K562 (cell line): ENCODE measurements at regions of chr1 and their contacts with region 1.

Region 1: DNA sequence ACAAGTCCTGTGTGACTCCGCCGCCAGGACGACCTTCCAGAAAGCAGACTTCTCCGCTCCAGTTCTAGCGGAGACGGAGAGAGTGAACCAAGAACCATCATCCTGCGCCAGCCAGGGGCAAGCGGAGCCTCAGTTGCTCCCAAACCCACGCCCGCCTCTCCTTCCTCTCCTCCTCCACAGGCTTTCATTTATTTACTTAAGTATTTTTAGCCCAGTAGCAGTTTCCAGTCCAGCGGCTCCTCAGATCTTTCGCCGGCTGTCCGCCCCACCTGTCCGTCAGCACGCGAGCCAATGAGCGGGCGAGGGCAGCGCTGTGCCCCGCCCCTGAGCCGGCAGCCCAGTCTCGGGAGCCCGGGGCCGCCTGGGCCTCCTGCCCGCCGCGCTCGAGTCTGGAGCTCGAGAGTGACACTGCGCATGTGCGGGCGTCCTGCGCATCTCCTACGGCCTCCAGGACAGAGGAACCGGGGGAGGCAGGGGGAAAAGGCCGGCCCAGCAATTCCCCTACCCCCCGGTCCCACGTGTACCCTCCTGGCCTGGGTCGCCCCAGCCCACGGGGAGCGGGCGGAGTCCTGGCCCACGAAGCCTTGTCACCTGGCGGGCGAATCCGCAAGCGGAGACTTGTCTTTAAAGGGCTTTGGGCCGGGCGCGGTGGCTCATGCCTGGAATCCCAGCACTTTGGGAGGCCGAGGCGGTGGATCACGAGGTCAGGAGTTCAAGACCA is at the start of gene FALEC:
- DNase-seq: peak; percentile 97 to 99 (median 98)
- ATAC-seq: peak; percentile 97
- H3K4me3 ChIP-seq: peak within 1 kb of the TSS; percentile 43
- H3K27ac ChIP-seq: peak within 1 kb of the TSS; percentile 83
- H3K4me1 ChIP-seq: peaks cover 28 to 42% of the 10 kb centered on the region in 2 experiments; a peak in 4 of 5 replicates
- H3K27me3 ChIP-seq: no peaks in the 10 kb centered on the region
- CTCF ChIP-seq: no peak
- EP300 ChIP-seq: no peak
- POLR2A ChIP-seq: peak; percentile 72
- RAD21 ChIP-seq: no peak
- polyA plus RNA-seq, gene FALEC: not detected

Region 2: DNA sequence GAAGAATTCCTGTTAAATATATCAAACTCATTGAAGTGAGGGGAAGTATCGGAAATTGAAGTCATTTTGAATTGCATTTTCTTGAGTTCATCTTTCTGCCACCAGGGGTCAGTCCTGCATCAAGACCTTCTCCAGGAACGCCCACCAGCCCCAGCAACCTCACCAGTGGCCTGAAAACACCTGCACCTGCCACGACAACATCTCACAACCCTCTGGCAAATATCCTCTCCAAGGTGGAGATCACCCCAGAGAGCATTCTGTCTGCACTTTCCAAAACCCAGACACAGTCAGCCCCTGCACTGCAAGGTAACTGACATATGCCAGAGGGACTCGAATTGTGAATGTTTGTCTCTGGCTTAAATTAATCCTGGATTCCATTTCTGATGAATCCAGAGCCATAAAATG is 51.1 kb before region 1 on chr1:
- CTCF ChIA-PET with region 1: interaction called, 10 read pairs
- POLR2A ChIA-PET with region 1: no interaction called
- in situ Hi-C with region 1: no loop called
- intact Hi-C with region 1: loop called (anchors 5 kb)
- DNase-seq: peak; percentile 67 to 84 (median 77)
- ATAC-seq: peak; percentile 85
- H3K4me3 ChIP-seq: no peak overlapping the region
- H3K27ac ChIP-seq: no peak overlapping the region
- H3K4me1 ChIP-seq: no peaks in the 10 kb centered on the region
- H3K27me3 ChIP-seq: no peaks in the 10 kb centered on the region
- CTCF ChIP-seq: peak; percentile 75 to 82 (median 81)
- EP300 ChIP-seq: no peak
- POLR2A ChIP-seq: no peak
- RAD21 ChIP-seq: peak; percentile 75 to 81

Region 3: GRCh38 chr1:150486964-150487762 is 28.3 kb before region 1 on chr1 and contains the start of gene TARS2:
- CTCF ChIA-PET with region 1: no interaction called
- POLR2A ChIA-PET with region 1: interaction called, 3 read pairs
- in situ Hi-C with region 1: no loop called
- intact Hi-C with region 1: loop called (anchors 1 kb)
- DNase-seq: peak; percentile 97 to 98 (median 98)
- ATAC-seq: peak; percentile 100
- H3K4me3 ChIP-seq: peak within 1 kb of the TSS; percentile 74
- H3K27ac ChIP-seq: peak within 1 kb of the TSS; percentile 93
- H3K4me1 ChIP-seq: peaks cover 3 to 10% of the 10 kb centered on the region in 2 experiments; a peak in 3 of 5 replicates
- H3K27me3 ChIP-seq: no peaks in the 10 kb centered on the region
- CTCF ChIP-seq: no peak; a peak in 1 of 6 replicates
- EP300 ChIP-seq: peak; percentile 61
- POLR2A ChIP-seq: peak; percentile 95
- RAD21 ChIP-seq: peak in 1 of 2 experiments; percentile 32; a peak in 1 of 4 replicates
- polyA plus RNA-seq, gene TARS2: 17.0 to 30.1 TPM

Region 4: GRCh38 chr1:150532868-150533302 is 17.4 kb after region 1 on chr1:
- CTCF ChIA-PET with region 1: no interaction called
- POLR2A ChIA-PET with region 1: interaction called, 17 read pairs
- in situ Hi-C with region 1: no loop called
- intact Hi-C with region 1: no loop called
- DNase-seq: no peak
- ATAC-seq: no peak
- H3K4me3 ChIP-seq: no peak overlapping the region
- H3K27ac ChIP-seq: 0 out of 3 replicates have a peak overlapping the region, but pooled peaks have one; percentile 13
- H3K4me1 ChIP-seq: peaks cover 9 to 19% of the 10 kb centered on the region in 2 experiments; a peak in 4 of 5 replicates
- H3K27me3 ChIP-seq: no peaks in the 10 kb centered on the region
- CTCF ChIP-seq: no peak; a peak in 1 of 6 replicates
- EP300 ChIP-seq: no peak
- POLR2A ChIP-seq: no peak
- RAD21 ChIP-seq: no peak

Region 5: GRCh38 chr1:150543500-150544141 is 28.1 kb after region 1 on chr1:
- CTCF ChIA-PET with region 1: no interaction called
- POLR2A ChIA-PET with region 1: interaction called, 18 read pairs
- in situ Hi-C with region 1: no loop called
- intact Hi-C with region 1: loop called (anchors 2 kb)
- DNase-seq: peak in 1 of 4 experiments; percentile 22
- ATAC-seq: no peak
- H3K4me3 ChIP-seq: no peak overlapping the region
- H3K27ac ChIP-seq: peak overlapping the region; percentile 87
- H3K4me1 ChIP-seq: peaks cover 30 to 47% of the 10 kb centered on the region in 2 experiments
- H3K27me3 ChIP-seq: no peaks in the 10 kb centered on the region
- CTCF ChIP-seq: no peak
- EP300 ChIP-seq: no peak
- POLR2A ChIP-seq: no peak
- RAD21 ChIP-seq: no peak

Region 6: DNA sequence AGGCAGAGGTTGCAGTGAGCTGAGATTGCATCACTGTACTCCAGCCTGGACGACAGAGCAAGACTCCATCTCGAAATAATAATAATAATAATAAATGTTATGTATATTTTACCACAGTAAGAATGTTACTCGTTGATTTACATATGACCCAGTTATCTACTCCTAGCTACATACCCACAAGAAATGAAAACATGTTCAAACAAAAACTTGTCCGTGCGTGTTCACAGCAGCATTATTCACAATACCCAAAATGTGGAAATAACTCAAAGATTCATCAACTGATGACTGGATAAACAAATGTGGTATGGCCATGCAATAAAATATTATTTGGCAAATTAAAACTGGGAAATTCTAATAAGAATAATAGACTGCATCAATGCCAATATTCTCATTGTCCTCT is 145.7 kb after region 1 on chr1:
- CTCF ChIA-PET with region 1: no interaction called
- POLR2A ChIA-PET with region 1: no interaction called
- in situ Hi-C with region 1: no loop called
- intact Hi-C with region 1: no loop called
- DNase-seq: no peak
- ATAC-seq: no peak
- H3K4me3 ChIP-seq: no peak overlapping the region
- H3K27ac ChIP-seq: no peak overlapping the region
- H3K4me1 ChIP-seq: no peaks in the 10 kb centered on the region
- H3K27me3 ChIP-seq: no peaks in the 10 kb centered on the region
- CTCF ChIP-seq: no peak
- EP300 ChIP-seq: no peak
- POLR2A ChIP-seq: no peak
- RAD21 ChIP-seq: no peak